Transverse colon (tissue), 4 donors: ENCODE measurements at regions of chr10 and their contacts with region 1.

Region 1: GRCh38 chr10:26269754-26270153 is 53.2 kb downstream of the GAD2 start:
- DNase-seq: no peak
- H3K4me3 ChIP-seq: no peak overlapping the region
- H3K27ac ChIP-seq: no peak overlapping the region
- H3K4me1 ChIP-seq: peaks cover 0 to 4% (median 0%) of the 10 kb centered on the region in 4 donors
- H3K27me3 ChIP-seq: peaks cover 4% of the 10 kb centered on the region
- CTCF ChIP-seq: peak in 1 of 5 experiments; percentile 19
- EP300 ChIP-seq: no peak
- POLR2A ChIP-seq: no peak

Region 2: DNA sequence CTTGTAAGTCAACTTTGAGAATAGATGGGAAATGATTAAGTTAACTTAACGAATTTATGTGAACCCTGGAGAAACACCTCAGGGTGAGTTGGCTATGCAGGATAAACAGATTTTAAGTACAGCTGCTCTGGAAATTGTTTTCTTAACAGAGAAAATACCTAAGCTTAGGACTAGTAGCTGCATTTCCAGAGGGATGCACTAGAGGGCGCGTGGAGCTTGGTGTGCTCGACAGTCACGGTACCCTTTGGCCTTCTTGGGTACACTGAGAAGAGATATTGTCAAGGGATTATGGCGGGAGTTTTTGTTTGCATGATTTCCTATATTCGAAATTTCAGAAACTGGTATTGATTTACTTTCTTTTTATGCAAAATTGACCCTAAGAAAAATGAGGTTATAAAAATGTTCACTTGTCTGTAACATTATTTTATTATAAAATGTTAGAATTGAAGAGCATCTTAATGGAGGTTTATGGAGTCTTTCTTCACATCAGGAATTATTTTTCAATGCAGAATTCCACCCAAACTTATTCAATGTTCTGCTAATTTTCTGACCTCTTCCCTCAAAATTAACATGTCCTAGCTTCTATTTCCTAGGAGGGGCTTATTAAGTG is 394.1 kb before region 1 on chr10:
- in situ Hi-C with region 1: loop called in 1 of 4 experiments (anchors 25 kb)
- intact Hi-C with region 1: no loop called
- DNase-seq: peak; percentile 75
- H3K4me3 ChIP-seq: no peak overlapping the region
- H3K27ac ChIP-seq: no peak overlapping the region
- H3K4me1 ChIP-seq: no peaks in the 10 kb centered on the region
- H3K27me3 ChIP-seq: no peaks in the 10 kb centered on the region
- CTCF ChIP-seq: peak; percentile 63 to 84 (median 78)
- EP300 ChIP-seq: no peak
- POLR2A ChIP-seq: no peak